PC-9 (cell line): ENCODE measurements at regions of chr6 and their contacts with region 1.

Region 1: DNA sequence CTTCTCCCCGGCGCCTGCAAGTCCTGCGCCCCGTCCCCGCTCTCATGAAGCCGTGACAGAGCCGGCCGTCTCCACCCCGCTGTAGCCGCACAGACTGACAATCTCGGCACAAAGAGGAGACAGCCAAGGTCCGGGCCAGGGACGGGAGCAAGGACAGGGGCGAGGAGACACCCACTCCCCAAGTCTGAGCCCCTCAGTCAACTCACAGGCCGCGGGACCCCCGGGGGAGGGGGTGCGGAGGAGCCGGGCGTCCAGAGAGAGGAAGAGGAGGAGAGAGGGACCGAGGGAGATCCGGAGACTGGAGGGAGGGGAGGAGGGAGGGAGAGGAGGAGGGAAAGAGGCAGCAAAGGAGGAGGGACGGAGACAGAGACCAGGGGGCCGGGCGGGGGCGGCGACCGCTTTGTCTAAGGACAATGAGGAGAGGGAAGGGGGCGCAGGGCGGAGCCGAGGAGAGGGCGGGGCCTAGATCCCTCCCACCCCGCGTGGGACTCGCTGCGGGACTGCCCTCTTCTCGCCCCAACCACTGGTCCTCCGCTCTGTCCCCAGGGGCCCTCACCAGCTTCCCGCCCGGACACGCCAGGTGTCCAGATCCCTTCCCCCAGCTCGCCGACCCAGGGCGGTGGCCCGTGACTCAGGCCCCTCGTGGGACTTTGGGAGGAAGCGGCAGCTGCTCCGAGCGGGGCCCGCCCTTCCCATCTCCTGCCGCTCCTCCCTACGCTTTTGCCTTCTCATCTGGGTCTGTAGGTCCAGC is 638 bp upstream of the PPP1R18 start:
- DNase-seq: peak; percentile 80 to 98
- H3K4me3 ChIP-seq: peak overlapping the region; percentile 98
- H3K27ac ChIP-seq: peak overlapping the region; percentile 72
- H3K4me1 ChIP-seq: peaks cover 59% of the 10 kb centered on the region
- H3K27me3 ChIP-seq: no peaks in the 10 kb centered on the region
- CTCF ChIP-seq: no peak

Region 2: GRCh38 chr6:30600451-30600961 is 86.6 kb before region 1 on chr6:
- CTCF ChIA-PET with region 1: no interaction called
- POLR2A ChIA-PET with region 1: no interaction called
- intact Hi-C with region 1: no loop called
- DNase-seq: no peak
- H3K4me3 ChIP-seq: no peak overlapping the region
- H3K27ac ChIP-seq: no peak overlapping the region
- H3K4me1 ChIP-seq: no peaks in the 10 kb centered on the region
- H3K27me3 ChIP-seq: no peaks in the 10 kb centered on the region
- CTCF ChIP-seq: no peak

Region 3: DNA sequence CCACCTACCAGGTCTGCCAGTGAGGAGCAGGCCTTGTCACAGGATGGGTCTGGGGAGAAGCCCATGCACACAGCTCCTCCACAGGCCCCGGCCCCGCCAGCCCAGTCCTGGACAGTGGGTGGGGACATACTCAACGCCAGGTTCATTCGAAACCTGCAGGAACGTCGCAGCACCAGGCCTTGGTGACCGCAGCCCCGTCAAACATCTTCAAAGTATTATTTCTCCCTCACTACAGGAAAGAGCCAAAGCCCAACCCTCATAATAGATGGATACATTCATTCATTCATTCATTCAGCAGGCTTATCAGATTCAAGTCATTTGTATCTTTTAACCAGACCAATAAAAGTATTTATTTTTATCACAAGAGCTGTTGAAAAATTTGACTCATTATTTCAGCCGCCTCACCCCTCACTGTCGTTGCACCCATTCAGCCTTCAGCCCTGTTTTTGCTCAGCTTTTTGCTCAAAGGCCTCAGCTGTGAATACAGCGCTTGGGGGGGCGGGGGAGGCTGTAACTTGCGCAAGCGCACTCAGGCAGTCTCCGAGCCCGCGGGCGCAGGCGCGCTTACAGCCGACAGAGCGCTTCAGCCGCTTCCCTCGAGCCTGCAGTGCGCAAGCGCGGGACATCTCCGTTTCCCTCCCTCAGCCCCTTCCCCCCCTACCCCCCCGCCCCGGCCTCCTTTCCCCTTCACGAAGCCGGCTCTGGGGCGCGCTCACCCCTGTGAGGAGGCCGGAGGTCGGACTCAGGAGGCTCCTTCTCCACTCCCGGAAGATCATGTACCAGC is 40.4 kb before region 1 on chr6 and contains the start of gene C6orf136:
- CTCF ChIA-PET with region 1: interaction called, 5 read pairs
- POLR2A ChIA-PET with region 1: interaction called, 19 read pairs
- intact Hi-C with region 1: no loop called
- DNase-seq: peak; percentile 80 to 91
- H3K4me3 ChIP-seq: peak within 1 kb of the TSS; percentile 91
- H3K27ac ChIP-seq: peak within 1 kb of the TSS; percentile 39; the same call in 1 of the 2 replicates
- H3K4me1 ChIP-seq: peaks cover 8% of the 10 kb centered on the region
- H3K27me3 ChIP-seq: no peaks in the 10 kb centered on the region
- CTCF ChIP-seq: no peak
- total RNA-seq, gene C6orf136: 21.2 and 33.3 TPM in 2 replicates

Region 4: DNA sequence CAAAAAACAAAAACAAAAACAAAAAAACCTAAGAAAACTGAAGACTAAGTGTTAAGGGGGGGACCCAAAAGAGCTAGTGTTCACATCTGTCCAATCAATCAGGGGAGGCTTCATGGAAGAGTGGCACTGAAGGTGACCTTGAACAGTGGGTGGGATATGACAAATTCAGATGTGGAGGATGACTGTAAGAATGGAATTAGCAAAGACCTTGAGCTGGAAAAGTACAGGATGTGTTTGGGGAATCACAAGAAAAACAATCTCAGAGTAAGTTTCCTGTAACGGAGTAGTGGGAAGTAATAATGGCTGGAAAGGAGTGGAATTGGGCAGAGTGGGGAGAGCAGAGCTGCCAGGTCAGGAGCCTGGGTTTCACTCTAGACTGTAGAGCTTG is 60.2 kb after region 1 on chr6:
- CTCF ChIA-PET with region 1: no interaction called
- POLR2A ChIA-PET with region 1: no interaction called
- intact Hi-C with region 1: no loop called
- DNase-seq: no peak
- H3K4me3 ChIP-seq: peak overlapping the region; percentile 50; the same call in 1 of the 2 replicates
- H3K27ac ChIP-seq: peak overlapping the region; percentile 100
- H3K4me1 ChIP-seq: peaks cover 74% of the 10 kb centered on the region
- H3K27me3 ChIP-seq: no peaks in the 10 kb centered on the region
- CTCF ChIP-seq: no peak

Region 5: GRCh38 chr6:31143148-31143547 is 456.1 kb after region 1 on chr6:
- CTCF ChIA-PET with region 1: interaction called, 10 read pairs
- POLR2A ChIA-PET with region 1: no interaction called
- intact Hi-C with region 1: no loop called
- DNase-seq: no peak
- H3K4me3 ChIP-seq: no peak overlapping the region
- H3K27ac ChIP-seq: no peak overlapping the region
- H3K4me1 ChIP-seq: no peaks in the 10 kb centered on the region
- H3K27me3 ChIP-seq: no peaks in the 10 kb centered on the region
- CTCF ChIP-seq: no peak

Region 6: DNA sequence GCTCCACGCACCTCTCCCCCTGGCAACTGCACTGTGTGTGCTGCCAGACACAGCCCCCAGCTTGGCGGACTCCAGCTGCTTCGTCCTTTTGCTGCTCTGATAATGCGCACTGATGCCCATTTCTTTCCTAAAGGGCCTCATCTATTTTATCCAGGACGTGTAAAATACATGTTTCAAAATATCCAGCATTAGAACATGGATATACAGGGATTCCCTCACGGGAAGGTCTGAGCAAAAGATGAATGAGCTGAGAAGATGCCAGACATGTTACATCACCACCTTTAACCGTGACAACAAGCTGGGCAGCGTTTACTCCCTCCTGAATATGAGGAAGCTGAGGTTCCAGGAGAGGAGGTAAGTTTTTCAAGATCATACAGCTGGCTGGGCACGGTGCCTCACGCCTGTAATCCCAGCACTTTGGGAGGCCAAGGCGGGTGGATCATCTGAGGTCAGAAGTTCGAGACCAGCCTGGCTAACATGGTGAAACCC is 1389.3 kb after region 1 on chr6:
- CTCF ChIA-PET with region 1: no interaction called
- POLR2A ChIA-PET with region 1: no interaction called
- intact Hi-C with region 1: no loop called
- DNase-seq: peak; percentile 66 to 82
- H3K4me3 ChIP-seq: no peak overlapping the region
- H3K27ac ChIP-seq: peak overlapping the region; percentile 52
- H3K4me1 ChIP-seq: peaks cover 53% of the 10 kb centered on the region
- H3K27me3 ChIP-seq: no peaks in the 10 kb centered on the region
- CTCF ChIP-seq: no peak